CD4-positive, alpha-beta T cell (primary cell): ENCODE measurements at regions of chr9 and their contacts with region 1.

Region 1: GRCh38 chr9:38088006-38088925 is 19.2 kb upstream of the SHB start:
- DNase-seq: peak; percentile 36 to 80 (median 66)
- ATAC-seq: peak; percentile 59
- H3K4me3 ChIP-seq: no peak overlapping the region
- H3K4me3 Mint-ChIP-seq: no peak overlapping the region
- H3K27ac ChIP-seq: no peak overlapping the region
- H3K27ac Mint-ChIP-seq: no peak overlapping the region
- H3K4me1 ChIP-seq: no peaks in the 10 kb centered on the region
- H3K4me1 Mint-ChIP-seq: no peaks in the 10 kb centered on the region
- H3K27me3 ChIP-seq: no peaks in the 10 kb centered on the region
- H3K27me3 Mint-ChIP-seq: peaks cover 4% of the 10 kb centered on the region
- CTCF ChIP-seq: peak; percentile 99

Region 2: GRCh38 chr9:37290940-37291485 is 797.3 kb before region 1 on chr9:
- CTCF ChIA-PET with region 1: no interaction called
- POLR2A ChIA-PET with region 1: no interaction called
- intact Hi-C with region 1: no loop called
- DNase-seq: peak in 2 of 14 experiments; percentile 11 to 12
- ATAC-seq: no peak
- H3K4me3 ChIP-seq: no peak overlapping the region
- H3K4me3 Mint-ChIP-seq: no peak overlapping the region
- H3K27ac ChIP-seq: no peak overlapping the region
- H3K27ac Mint-ChIP-seq: no peak overlapping the region
- H3K4me1 ChIP-seq: peaks cover 3% of the 10 kb centered on the region
- H3K4me1 Mint-ChIP-seq: peaks cover 59% of the 10 kb centered on the region
- H3K27me3 ChIP-seq: no peaks in the 10 kb centered on the region
- H3K27me3 Mint-ChIP-seq: no peaks in the 10 kb centered on the region
- CTCF ChIP-seq: no peak

Region 3: GRCh38 chr9:38263532-38263931 is 175.3 kb after region 1 on chr9:
- CTCF ChIA-PET with region 1: no interaction called
- POLR2A ChIA-PET with region 1: no interaction called
- intact Hi-C with region 1: loop called (anchors 2 to 10 kb)
- DNase-seq: peak in 2 of 14 experiments; percentile 6 to 27
- ATAC-seq: no peak
- H3K4me3 ChIP-seq: no peak overlapping the region
- H3K4me3 Mint-ChIP-seq: no peak overlapping the region
- H3K27ac ChIP-seq: no peak overlapping the region
- H3K27ac Mint-ChIP-seq: no peak overlapping the region
- H3K4me1 ChIP-seq: no peaks in the 10 kb centered on the region
- H3K4me1 Mint-ChIP-seq: no peaks in the 10 kb centered on the region
- H3K27me3 ChIP-seq: peaks cover 0 to 5% of the 10 kb centered on the region in 2 experiments
- H3K27me3 Mint-ChIP-seq: peaks cover 17% of the 10 kb centered on the region
- CTCF ChIP-seq: no peak

Region 4: DNA sequence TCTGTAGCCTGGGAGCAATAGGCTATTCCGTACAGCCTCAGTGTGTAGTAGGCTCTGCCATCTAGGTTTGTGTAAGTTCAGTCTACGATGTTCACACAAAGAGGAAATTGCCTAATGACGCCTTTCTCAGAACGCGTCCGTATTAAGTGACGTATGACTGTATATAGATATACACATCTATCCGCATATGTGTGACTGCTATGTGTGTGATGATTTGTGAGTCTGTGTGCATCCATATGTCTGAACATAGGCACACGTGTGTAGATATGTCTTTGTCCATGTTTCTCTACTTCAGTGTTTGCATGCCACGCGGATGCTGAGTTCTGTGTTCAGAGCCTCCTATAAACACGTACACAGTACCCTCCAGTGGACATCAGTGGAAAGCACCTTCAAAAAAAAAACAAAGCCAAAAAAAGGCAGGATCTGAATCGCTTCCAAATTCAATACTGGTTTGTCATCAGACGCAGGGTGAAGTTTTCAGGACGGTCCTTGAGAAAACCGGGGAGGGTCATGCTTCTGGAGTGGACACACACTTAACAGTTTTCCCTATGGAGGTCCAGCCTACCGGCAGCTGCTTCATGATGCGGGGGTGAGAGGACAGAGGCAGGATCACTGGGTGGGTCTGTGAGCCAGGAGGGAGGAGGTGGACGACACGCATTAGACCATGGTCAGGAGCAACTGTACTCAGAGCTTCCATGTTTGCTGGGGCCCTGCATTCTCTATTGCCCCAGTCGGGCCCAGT is 274.8 kb after region 1 on chr9:
- CTCF ChIA-PET with region 1: no interaction called
- POLR2A ChIA-PET with region 1: no interaction called
- intact Hi-C with region 1: loop called (anchors 2 to 5 kb)
- DNase-seq: peak in 5 of 14 experiments; percentile 7 to 61 (median 27)
- ATAC-seq: peak; percentile 83
- H3K4me3 ChIP-seq: peak overlapping the region; percentile 24
- H3K4me3 Mint-ChIP-seq: peak overlapping the region; percentile 46
- H3K27ac ChIP-seq: no peak overlapping the region
- H3K27ac Mint-ChIP-seq: no peak overlapping the region
- H3K4me1 ChIP-seq: no peaks in the 10 kb centered on the region
- H3K4me1 Mint-ChIP-seq: peaks cover 7% of the 10 kb centered on the region
- H3K27me3 ChIP-seq: no peaks in the 10 kb centered on the region
- H3K27me3 Mint-ChIP-seq: peaks cover 4% of the 10 kb centered on the region
- CTCF ChIP-seq: no peak

Region 5: GRCh38 chr9:38393128-38393796 is 305.0 kb after region 1 on chr9:
- CTCF ChIA-PET with region 1: no interaction called
- POLR2A ChIA-PET with region 1: no interaction called
- intact Hi-C with region 1: loop called in 1 of 2 experiments (anchors 2 kb)
- DNase-seq: no peak
- ATAC-seq: no peak
- H3K4me3 ChIP-seq: peak overlapping the region; percentile 85
- H3K4me3 Mint-ChIP-seq: peak overlapping the region; percentile 97
- H3K27ac ChIP-seq: no peak overlapping the region
- H3K27ac Mint-ChIP-seq: peak overlapping the region; percentile 73
- H3K4me1 ChIP-seq: peaks cover 16% of the 10 kb centered on the region
- H3K4me1 Mint-ChIP-seq: peaks cover 15% of the 10 kb centered on the region
- H3K27me3 ChIP-seq: no peaks in the 10 kb centered on the region
- H3K27me3 Mint-ChIP-seq: no peaks in the 10 kb centered on the region
- CTCF ChIP-seq: no peak